ENCODE measurements at regions of chr16 and their contacts with region 1.

Region 1: DNA sequence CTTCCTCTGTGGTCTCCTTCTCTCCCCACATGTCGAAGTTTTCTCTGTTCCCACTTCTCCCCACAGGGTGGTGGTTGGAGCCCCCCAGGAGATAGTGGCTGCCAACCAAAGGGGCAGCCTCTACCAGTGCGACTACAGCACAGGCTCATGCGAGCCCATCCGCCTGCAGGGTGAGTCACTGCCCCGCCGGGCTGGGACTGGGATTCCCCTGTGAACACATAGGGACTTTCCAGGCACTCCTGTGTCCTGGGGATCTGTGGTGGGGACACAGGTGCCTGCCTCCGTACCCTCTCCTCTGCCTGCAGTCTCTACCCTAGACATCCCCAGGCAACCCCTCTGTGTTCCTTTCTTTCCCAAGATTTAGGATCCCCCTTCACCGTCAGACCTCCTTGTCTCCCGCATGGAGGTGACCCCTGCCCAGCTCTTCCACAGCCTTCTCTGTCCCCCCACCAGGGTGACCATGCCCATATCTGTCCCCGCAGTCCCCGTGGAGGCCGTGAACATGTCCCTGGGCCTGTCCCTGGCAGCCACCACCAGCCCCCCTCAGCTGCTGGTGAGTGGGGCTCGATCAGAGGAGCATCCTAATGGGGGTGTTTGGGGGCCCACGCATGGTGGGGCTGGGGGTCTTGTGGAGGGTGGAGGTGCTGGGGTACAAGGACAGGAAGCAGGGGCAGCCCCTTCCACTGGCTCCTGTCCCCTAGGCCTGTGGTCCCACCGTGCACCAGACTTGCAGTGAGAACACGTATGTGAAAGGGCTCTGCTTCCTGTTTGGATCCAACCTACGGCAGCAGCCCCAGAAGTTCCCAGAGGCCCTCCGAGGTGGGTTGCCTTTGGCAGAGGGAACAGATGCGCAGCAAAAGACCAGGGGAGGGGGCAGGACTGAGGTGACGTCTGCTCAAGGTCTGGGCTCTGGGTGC is 5.8 kb downstream of the ITGAM start:
- DNase-seq: no peak
- ATAC-seq: peak in 1 of 8 donors; percentile 27
- H3K4me3 ChIP-seq: no peak overlapping the region
- H3K27ac ChIP-seq: peak overlapping the region in 1 of 10 donors; percentile 2
- H3K4me1 ChIP-seq: peaks cover 0 to 43% (median 0%) of the 10 kb centered on the region in 9 donors
- H3K27me3 ChIP-seq: peaks cover 0 to 39% (median 15%) of the 10 kb centered on the region in 7 donors
- CTCF ChIP-seq: no peak

Region 2: DNA sequence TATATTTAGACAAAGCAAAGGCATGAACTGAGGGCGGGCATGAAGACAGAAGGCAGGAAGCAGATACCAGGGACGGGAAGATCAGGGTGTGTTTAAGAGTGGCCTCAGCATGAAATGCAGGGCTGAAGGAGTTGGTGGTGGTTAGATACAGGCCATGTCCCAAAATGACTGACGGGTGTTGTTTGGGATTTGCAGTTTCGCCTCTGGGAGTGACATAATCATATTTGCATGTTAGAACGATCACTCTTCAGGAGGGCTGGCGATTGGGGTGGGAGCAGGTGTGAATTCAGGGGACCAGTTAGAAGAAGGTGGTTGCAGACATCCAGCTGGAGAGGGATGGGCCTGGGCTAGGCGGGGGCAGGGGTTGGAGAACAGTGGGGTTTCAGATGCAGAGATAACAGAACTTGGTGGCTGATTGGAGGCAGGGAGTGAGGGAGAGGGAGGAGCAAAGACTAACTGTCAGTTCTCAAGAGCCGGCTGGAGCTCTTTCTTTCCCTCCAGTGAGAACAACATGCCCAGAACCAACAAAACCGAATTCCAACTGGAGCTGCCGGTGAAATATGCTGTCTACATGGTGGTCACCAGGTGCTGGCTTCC is 62.2 kb after region 1 on chr16:
- intact Hi-C with region 1: loop called in 1 of 10 experiments (anchors 10 kb)
- DNase-seq: no peak
- ATAC-seq: no peak
- H3K4me3 ChIP-seq: no peak overlapping the region
- H3K27ac ChIP-seq: no peak overlapping the region
- H3K4me1 ChIP-seq: peaks cover 0 to 5% (median 0%) of the 10 kb centered on the region in 9 donors
- H3K27me3 ChIP-seq: peaks cover 6 to 60% (median 46%) of the 10 kb centered on the region in 7 donors
- CTCF ChIP-seq: no peak